Activated CD4-positive, alpha-beta T cell treated with anti-CD3 and anti-CD28 coated beads for 36 hours (primary cell): ENCODE measurements at regions of chr10 and their contacts with region 1.

Region 1: DNA sequence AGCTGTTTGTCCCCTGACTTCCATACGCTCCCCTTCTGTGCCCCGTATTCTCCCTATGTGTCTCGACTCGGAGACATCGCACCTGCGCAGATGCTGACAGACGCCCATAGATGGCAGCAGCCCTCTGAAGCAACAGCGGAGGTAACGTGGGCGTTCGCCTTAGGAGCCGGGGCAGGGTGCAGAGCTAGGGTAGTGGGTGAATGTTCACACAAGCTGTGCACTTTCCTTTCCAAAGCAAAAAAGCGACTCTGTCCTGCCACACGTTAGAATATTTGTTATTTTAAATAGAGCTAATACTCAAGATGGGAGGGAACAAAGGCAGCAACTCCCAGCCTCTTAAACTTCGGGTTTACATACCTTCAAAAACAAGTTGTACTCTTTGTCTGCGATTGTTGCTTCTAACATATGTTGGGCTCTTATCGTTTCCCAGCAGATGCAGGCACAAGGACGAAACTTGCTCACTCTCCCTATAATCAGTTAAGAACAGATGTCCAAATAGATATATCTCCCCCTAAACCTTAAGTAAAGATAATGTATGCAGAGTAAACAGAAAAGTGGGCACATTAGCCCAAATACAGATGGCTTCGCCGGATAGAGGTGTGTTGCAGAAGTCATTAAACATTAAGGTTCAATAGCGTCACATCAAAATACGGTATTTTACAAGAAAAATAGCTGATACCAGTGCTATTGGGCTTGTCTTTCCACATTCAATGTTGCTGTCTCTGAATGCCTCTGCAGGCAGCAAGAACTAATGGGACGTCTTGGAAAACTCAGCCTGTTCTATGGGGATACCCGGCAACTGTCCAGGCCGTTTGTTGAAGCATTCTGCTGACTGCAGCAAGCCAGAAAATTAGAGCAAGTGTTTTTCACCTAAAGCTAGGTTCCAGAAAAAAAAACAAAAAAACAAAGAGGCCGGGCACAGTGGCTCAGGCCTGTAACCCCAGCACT is 340.3 kb upstream of the PRKCQ start:
- DNase-seq: peak; percentile 90
- ATAC-seq: peak; percentile 99
- H3K4me3 Mint-ChIP-seq: no peak overlapping the region
- H3K27ac Mint-ChIP-seq: no peak overlapping the region
- H3K4me1 Mint-ChIP-seq: peaks cover 15% of the 10 kb centered on the region
- H3K27me3 Mint-ChIP-seq: peaks cover 2% of the 10 kb centered on the region

Region 2: GRCh38 chr10:6023661-6024333 is 896.5 kb before region 1 on chr10:
- CTCF ChIA-PET with region 1: no interaction called
- POLR2A ChIA-PET with region 1: no interaction called
- intact Hi-C with region 1: no loop called
- DNase-seq: no peak
- ATAC-seq: no peak
- H3K4me3 Mint-ChIP-seq: no peak overlapping the region
- H3K27ac Mint-ChIP-seq: no peak overlapping the region
- H3K4me1 Mint-ChIP-seq: peaks cover 42% of the 10 kb centered on the region
- H3K27me3 Mint-ChIP-seq: no peaks in the 10 kb centered on the region

Region 3: GRCh38 chr10:7030134-7030855 is 109.9 kb after region 1 on chr10:
- CTCF ChIA-PET with region 1: interaction called, 7 read pairs
- POLR2A ChIA-PET with region 1: no interaction called
- intact Hi-C with region 1: loop called in 1 of 2 experiments (anchors 5 kb)
- DNase-seq: no peak
- ATAC-seq: no peak
- H3K4me3 Mint-ChIP-seq: no peak overlapping the region
- H3K27ac Mint-ChIP-seq: no peak overlapping the region
- H3K4me1 Mint-ChIP-seq: peaks cover 35% of the 10 kb centered on the region
- H3K27me3 Mint-ChIP-seq: no peaks in the 10 kb centered on the region

Region 4: DNA sequence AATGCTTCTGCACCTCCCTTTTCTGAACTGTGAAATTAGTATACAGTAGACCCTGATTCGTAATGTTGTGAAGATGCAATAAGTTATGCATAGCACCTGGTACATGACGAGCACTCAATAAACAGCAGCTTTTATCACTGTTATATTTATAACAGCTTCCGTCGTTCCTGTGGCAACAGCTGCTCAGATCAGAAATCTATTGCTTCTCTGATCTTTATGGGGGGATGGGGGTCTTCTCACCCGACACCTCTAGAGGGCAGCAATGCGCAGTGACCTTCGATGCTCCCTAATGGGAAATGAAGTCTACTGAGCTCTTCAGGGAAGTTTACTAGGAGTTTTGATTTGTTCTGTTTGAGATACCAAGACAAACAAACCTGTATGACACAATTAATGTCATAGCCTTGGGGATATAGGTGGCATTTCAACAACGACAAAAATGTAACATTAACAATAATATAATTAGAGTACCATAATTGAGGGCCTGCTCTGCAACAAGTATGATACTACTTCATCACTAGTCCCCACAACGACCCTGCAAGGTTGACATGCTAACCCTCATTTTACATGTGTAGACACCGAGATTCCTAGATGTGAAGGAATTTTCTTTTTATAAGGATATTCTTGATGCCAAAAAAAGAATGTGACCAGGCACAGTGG is 200.9 kb after region 1 on chr10:
- CTCF ChIA-PET with region 1: interaction called, 11 read pairs
- POLR2A ChIA-PET with region 1: no interaction called
- intact Hi-C with region 1: loop called (anchors 5 kb)
- DNase-seq: peak; percentile 83
- ATAC-seq: peak; percentile 91
- H3K4me3 Mint-ChIP-seq: no peak overlapping the region
- H3K27ac Mint-ChIP-seq: no peak overlapping the region
- H3K4me1 Mint-ChIP-seq: peaks cover 5% of the 10 kb centered on the region
- H3K27me3 Mint-ChIP-seq: peaks cover 2% of the 10 kb centered on the region

Region 5: DNA sequence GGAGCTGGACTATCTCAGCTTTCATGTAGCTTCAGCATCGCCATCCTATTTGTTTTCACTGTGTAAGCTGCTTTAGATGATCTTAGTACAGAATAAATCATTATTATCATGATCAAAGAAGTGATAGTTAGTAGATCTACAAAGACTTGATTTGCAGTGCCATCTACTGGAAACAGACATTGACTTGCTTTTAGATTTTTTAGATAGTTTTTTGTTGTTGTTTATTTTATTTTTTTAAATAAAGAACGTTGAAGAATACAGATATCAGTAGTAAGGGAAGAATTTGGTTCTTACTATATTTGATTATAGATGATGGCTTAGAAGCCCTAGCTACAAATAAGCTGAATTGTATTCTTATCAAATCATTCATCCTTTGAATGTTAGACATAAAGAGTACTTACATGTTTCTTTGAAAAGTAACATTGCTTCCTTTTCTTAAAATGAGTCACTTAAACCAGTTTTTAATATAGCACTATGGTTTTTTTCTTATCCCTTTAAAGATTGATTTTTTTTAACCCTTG is 496.8 kb after region 1 on chr10:
- CTCF ChIA-PET with region 1: interaction called, 11 read pairs
- POLR2A ChIA-PET with region 1: no interaction called
- intact Hi-C with region 1: loop called (anchors 1 kb)
- DNase-seq: no peak
- ATAC-seq: peak; percentile 37
- H3K4me3 Mint-ChIP-seq: no peak overlapping the region
- H3K27ac Mint-ChIP-seq: peak overlapping the region; percentile 34
- H3K4me1 Mint-ChIP-seq: peaks cover 26% of the 10 kb centered on the region
- H3K27me3 Mint-ChIP-seq: peaks cover 9% of the 10 kb centered on the region

Region 6: GRCh38 chr10:7687228-7687907 is 767.0 kb after region 1 on chr10:
- CTCF ChIA-PET with region 1: no interaction called
- POLR2A ChIA-PET with region 1: no interaction called
- intact Hi-C with region 1: loop called in 1 of 2 experiments (anchors 1 kb)
- DNase-seq: peak; percentile 89
- ATAC-seq: peak; percentile 92
- H3K4me3 Mint-ChIP-seq: no peak overlapping the region
- H3K27ac Mint-ChIP-seq: no peak overlapping the region
- H3K4me1 Mint-ChIP-seq: peaks cover 7% of the 10 kb centered on the region
- H3K27me3 Mint-ChIP-seq: peaks cover 7% of the 10 kb centered on the region